ENCODE measurements at regions of chr4 and their contacts with region 1.

Region 1: DNA sequence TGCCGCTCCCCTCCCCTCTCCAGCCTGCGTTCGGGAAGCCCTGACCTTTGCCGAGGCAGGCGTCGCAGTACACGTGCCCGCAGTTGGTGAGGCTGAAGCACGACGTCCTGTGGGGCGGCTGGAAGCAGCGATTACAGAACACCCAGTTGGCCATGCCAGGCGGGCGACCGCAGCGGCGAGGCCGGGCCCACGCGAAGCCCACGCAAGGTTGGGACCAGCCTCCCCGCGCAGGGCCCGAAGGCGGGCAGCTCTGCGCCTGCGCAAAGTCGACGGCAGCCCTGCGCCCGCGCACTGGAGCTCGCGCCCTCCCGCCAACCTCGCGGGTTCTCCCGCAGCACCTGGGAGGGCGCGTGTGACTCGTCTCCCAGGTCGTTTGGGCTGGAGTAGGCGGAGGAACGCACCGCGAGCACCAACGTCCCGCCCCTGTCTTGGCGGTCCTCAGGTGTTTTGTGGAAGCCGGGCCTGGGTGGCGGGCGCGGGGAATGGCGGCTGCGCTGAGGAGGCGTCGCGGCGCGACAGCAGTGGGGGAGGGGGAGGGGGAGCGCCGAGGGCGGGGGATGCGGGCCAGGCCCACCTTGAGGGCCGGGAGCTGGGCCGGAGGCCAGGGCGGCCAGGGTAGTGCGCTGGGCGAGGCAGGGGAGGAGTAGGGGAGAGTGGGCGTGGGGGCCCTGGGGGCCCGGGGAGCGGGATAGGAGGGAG is at the start of gene RNF212:
- DNase-seq: peak; percentile 40
- ATAC-seq: peak; percentile 79
- H3K4me3 Mint-ChIP-seq: peak within 1 kb of the TSS; percentile 60
- H3K27ac Mint-ChIP-seq: no peak within 1 kb of the TSS
- H3K4me1 Mint-ChIP-seq: peaks cover 2% of the 10 kb centered on the region
- H3K27me3 Mint-ChIP-seq: peaks cover 19% of the 10 kb centered on the region
- CTCF ChIP-seq: no peak
- total RNA-seq, gene RNF212: 3.0 to 3.3 TPM

Region 2: GRCh38 chr4:997375-998071 is 115.9 kb before region 1 on chr4:
- CTCF ChIA-PET with region 1: no interaction called
- POLR2A ChIA-PET with region 1: no interaction called
- intact Hi-C with region 1: no loop called
- DNase-seq: no peak
- ATAC-seq: peak; percentile 31
- H3K4me3 Mint-ChIP-seq: no peak overlapping the region
- H3K27ac Mint-ChIP-seq: no peak overlapping the region
- H3K4me1 Mint-ChIP-seq: no peaks in the 10 kb centered on the region
- H3K27me3 Mint-ChIP-seq: peaks cover 27% of the 10 kb centered on the region
- CTCF ChIP-seq: no peak

Region 3: DNA sequence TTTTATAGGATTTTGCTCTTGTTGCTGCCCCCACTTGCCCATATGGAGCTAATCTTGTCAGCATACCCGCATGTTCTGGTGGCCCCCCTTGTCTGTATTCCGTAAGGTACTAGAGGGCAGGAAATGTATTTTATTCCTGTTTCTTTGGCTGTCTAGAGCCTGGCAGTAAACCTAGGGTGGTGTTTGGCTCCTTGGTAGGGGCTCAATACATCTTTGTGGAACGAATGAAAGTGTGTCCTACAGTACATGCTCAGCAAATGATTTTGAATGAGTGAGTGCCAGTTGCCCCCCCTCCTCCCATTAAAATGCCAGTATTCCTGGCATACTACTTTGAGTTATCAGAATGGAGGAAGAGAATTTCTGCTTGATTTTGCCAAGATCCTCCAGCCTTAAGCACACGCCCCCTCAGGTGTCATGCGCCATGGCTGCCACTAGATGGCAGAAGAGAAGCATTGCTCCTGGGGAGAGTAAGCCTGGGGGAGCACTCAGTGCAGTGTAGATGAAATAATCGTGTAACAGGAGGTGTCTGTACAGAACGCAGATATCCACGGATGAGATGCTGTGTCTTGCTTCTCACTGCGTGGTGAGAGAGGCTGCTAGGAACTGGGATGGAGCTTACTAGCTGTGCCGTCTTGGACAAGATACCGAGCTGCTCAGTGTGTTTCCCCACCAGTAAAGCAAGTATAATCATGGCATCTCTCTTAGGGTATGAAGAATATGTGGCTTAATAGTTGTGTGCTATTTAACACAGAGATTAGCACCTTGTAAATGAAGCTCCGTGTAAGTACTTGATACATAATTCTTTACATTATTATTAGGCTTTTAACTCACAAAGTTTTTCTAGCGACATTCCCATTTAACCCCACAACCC is 17.1 kb after region 1 on chr4:
- CTCF ChIA-PET with region 1: interaction called, 28 read pairs
- POLR2A ChIA-PET with region 1: interaction called, 4 read pairs
- intact Hi-C with region 1: no loop called
- DNase-seq: peak; percentile 72
- ATAC-seq: peak; percentile 100
- H3K4me3 Mint-ChIP-seq: no peak overlapping the region
- H3K27ac Mint-ChIP-seq: no peak overlapping the region
- H3K4me1 Mint-ChIP-seq: no peaks in the 10 kb centered on the region
- H3K27me3 Mint-ChIP-seq: peaks cover 3% of the 10 kb centered on the region
- CTCF ChIP-seq: peak; percentile 99

Measured in activated CD8-positive, alpha-beta T cell treated with anti-CD3 and anti-CD28 coated beads for 36 hours (primary cell).